Left ventricle myocardium superior (tissue), 1 donor: ENCODE measurements at regions of chr9 and their contacts with region 1.

Region 1: DNA sequence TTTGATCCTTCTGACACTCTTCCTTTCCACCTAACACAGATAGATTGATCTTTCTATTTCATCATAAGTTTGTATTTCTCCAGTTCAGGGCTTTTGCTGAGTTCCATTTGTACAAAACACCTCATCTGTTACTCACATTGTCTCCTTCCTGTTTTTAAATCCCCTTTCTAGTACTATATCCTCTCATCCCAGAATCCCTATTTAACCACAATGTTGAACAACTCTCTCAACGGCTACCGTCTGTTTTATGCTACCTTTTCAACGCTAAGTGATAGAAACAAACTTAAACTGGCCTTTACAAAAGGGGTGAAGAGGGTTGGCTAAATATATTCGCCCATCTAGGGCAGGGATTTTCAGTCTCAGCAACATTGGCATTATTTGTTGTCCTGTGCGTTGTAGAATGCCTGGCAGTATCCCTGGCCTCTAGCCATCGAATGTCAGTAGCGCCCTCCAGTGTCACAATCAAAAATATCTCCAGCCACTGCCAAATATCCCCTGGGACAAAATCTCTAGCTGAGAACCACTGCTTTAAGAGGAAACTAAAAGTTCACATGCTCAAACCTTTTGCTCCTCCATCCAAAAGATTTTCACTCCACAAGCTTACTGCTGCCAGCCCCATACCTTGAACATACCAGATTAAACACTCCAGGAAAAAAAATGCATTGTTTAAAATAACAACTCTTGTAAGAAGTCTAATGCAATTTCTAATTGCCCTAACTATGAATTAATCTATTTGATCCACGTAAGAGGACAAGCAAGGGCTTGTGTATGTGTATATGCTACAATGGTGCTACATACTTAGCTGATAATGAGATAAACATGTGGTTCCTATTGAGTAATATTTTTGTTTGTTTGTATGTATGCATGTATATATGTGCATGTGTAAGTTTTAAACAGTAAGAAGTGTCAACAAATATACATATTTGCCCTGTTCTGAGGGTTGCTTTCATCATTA is 344.0 kb downstream of the PTPRD start:
- DNase-seq: no peak
- ATAC-seq: peak; percentile 84

Region 2: GRCh38 chr9:10059044-10059443 is 209.8 kb before region 1 on chr9:
- intact Hi-C with region 1: loop called (anchors 2 kb)
- DNase-seq: no peak
- ATAC-seq: no peak

Region 3: GRCh38 chr9:10366171-10366779 is 97.5 kb after region 1 on chr9:
- intact Hi-C with region 1: no loop called
- DNase-seq: no peak
- ATAC-seq: no peak

Region 4: GRCh38 chr9:10729213-10729612 is 460.4 kb after region 1 on chr9:
- intact Hi-C with region 1: no loop called
- DNase-seq: no peak
- ATAC-seq: no peak